Calu3 (cell line): ENCODE measurements at regions of chrX and their contacts with region 1.

Region 1: GRCh38 chrX:24259544-24260240 is 54.2 kb downstream of the SUPT20HL2 start:
- DNase-seq: peak; percentile 43
- H3K4me3 Mint-ChIP-seq: no peak overlapping the region
- H3K27ac Mint-ChIP-seq: no peak overlapping the region
- H3K4me1 Mint-ChIP-seq: peaks cover 20% of the 10 kb centered on the region
- H3K27me3 Mint-ChIP-seq: no peaks in the 10 kb centered on the region
- CTCF ChIP-seq: no peak

Region 2: GRCh38 chrX:24371391-24371972 is 111.8 kb after region 1 on chrX:
- CTCF ChIA-PET with region 1: interaction called, 3 read pairs
- intact Hi-C with region 1: loop called (anchors 1 kb)
- DNase-seq: peak; percentile 64
- H3K4me3 Mint-ChIP-seq: peak overlapping the region; percentile 35
- H3K27ac Mint-ChIP-seq: no peak overlapping the region
- H3K4me1 Mint-ChIP-seq: no peaks in the 10 kb centered on the region
- H3K27me3 Mint-ChIP-seq: peaks cover 7% of the 10 kb centered on the region
- CTCF ChIP-seq: peak; percentile 50

Region 3: DNA sequence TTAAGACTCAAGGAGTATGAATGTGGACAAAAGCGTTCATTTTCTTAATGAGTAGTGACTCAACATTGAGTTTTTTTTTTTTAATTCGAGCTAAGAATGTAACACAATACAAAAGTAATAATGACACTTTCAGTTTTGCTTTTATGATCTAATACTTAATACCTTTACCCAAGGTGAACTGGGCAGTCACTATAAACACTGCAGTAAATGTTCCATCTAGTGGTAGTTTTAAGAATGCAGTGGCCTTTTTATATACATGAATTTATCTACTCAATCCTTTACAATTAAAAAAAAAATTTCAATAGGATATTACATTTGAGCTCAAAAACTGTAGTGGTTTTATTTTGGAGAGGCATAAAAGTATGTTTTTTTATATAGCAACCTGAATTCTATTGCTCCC is 239.3 kb after region 1 on chrX:
- CTCF ChIA-PET with region 1: interaction called, 5 read pairs
- intact Hi-C with region 1: loop called (anchors 2 kb)
- DNase-seq: no peak
- H3K4me3 Mint-ChIP-seq: no peak overlapping the region
- H3K27ac Mint-ChIP-seq: no peak overlapping the region
- H3K4me1 Mint-ChIP-seq: peaks cover 4% of the 10 kb centered on the region
- H3K27me3 Mint-ChIP-seq: no peaks in the 10 kb centered on the region
- CTCF ChIP-seq: no peak